Activated T-helper 1 cell treated with anti-CD3 and anti-CD28 coated beads, Interleukin-12 subunit alpha, Interleukin-12 subunit beta, Interleukin-2, Interleukin-4 antibody, amounts not matched to agents 30 ng/mL and 10 ng/mL and 1 ng/mL, durations not matched to agents 14 hours and 24 hours and 36 hours (primary cell): ENCODE measurements at regions of chr7 and their contacts with region 1.

Region 1: DNA sequence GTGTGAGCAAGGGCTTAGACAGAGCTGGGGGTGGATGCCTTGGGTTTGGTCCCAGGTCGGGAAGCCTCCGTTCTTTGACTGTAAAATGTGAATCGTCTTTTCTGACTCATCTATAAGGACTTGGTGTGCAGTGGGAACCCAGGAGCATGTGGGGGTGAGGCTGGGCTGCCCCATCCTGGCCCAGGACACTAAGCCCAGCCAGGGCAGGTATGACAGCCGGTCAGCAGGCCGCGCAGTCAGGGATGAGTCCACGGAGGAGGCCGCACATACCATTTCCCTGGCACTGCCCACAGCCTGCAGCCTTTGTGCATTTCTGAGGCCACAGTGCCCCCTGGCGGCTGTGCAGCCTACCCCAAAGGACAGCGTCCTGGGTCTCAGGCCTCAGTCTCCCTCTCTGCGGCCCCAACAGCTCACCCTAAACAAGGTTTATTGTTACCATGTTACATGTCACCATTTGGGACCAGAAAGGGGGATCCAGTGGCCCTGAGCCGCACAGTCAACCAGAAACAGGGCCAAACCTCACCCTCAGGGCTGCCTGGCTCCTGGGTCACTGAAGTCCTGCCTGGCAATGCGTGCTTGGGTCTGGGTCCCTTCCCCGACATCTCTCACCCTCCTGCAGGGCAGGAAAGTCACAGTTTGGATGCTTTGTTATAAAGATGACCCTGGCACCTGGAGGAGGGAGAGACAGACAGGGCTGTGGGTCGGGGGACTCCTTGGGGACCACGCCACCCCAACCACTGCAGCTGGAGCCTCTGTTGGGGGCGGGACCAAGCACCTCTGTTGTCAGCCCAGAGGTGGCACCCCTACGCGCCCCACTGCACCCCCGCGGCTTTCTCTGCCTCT is 14.4 kb upstream of the SH2B2 start:
- DNase-seq: peak; percentile 53
- H3K4me3 Mint-ChIP-seq: no peak overlapping the region
- H3K27ac Mint-ChIP-seq: no peak overlapping the region
- H3K4me1 Mint-ChIP-seq: no peaks in the 10 kb centered on the region
- H3K27me3 Mint-ChIP-seq: peaks cover 4% of the 10 kb centered on the region

Region 2: DNA sequence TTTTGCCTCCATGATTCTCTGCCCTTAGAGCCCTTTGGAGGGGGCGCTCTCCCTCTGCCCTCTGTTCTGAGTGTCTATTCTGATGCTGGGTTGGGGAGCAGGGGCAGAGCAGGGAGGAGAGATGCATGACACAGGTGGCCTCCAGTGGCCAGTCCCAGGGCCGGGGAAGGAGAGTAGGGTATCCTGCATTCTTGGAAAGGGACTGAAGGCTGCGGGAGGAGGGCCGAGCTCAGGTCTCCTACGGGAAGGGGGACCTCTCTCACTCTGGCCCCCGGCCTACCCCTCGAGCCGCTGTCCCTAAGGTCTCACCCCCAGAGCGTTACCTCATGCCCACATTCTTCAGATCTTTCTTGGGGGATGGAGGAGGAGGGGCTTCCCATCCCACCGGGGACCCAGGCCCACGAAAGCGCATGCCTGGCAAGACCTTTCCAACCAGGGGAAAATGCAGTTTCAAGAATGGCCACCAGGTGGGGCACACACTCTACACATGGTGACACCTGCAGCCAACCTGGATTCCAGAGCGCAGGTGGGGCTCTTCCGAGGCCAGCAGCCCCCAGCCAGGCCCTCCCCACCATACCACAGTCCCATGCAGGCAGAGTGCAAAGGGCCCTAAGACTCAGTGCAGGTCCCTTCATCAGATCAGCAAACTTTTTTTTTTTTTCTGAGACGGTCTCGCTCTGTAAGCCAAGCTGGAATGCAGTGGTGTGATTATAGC is 729.6 kb before region 1 on chr7:
- intact Hi-C with region 1: loop called (anchors 1 kb)
- DNase-seq: peak; percentile 48
- H3K4me3 Mint-ChIP-seq: no peak overlapping the region
- H3K27ac Mint-ChIP-seq: no peak overlapping the region
- H3K4me1 Mint-ChIP-seq: no peaks in the 10 kb centered on the region
- H3K27me3 Mint-ChIP-seq: no peaks in the 10 kb centered on the region

Region 3: DNA sequence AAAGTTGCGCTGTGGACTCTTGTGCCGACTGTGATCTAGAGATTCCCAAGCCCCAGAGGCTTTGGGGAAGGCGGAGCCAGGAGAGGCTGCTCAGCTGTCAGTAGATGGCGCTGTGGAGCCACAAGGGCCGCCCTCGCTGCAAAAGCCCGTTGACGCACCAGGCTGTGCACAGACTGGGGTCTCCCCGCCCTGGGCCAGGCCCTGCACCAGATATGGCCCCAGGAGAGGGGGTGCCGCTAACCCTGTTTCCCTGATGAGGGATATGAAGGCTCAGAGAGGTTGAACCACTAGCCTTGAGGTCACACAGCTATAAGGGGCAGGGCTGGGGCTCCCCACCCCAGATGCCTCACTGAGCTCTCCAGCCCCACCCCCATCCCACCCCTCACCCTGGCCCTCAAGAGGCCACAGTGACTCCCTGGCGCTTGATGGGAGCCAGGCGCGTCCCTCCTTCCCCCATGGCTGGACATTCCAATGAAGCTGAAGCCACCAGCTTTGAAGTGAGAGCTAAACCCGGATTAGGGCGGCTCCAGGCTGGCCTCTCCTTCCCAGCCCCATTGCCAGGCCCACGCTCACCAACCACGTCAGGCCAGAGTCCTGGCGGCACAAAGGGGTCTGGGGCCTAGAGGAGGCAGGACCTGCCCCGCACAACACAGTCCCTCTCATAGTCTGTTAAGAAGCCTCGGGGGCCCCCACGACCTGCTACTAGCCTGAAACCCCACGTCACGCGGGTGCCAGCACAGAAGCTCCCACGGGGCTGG is 669.6 kb before region 1 on chr7:
- intact Hi-C with region 1: loop called (anchors 1 kb)
- DNase-seq: peak; percentile 44
- H3K4me3 Mint-ChIP-seq: no peak overlapping the region
- H3K27ac Mint-ChIP-seq: no peak overlapping the region
- H3K4me1 Mint-ChIP-seq: no peaks in the 10 kb centered on the region
- H3K27me3 Mint-ChIP-seq: no peaks in the 10 kb centered on the region

Region 4: DNA sequence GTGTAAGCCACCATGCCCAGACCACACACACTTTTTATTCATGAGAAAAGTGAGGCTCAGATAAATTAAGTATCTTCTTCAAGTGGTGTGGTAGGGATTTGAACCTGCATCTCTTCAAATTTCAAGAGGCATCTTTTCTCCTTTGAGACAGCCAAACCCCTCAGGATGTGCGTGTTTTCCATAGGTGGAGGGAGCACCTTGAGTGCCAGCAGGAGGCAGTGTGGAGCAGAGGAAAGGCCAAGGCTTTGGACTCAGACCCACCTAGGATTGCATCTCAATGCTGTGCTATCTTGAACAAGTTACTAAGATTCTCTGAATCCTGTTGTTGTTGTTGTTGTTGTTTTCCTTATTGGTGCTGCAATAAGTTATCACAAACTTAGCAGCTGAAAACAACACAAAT is 603.0 kb before region 1 on chr7:
- intact Hi-C with region 1: loop called (anchors 1 kb)
- DNase-seq: no peak
- H3K4me3 Mint-ChIP-seq: no peak overlapping the region
- H3K27ac Mint-ChIP-seq: no peak overlapping the region
- H3K4me1 Mint-ChIP-seq: no peaks in the 10 kb centered on the region
- H3K27me3 Mint-ChIP-seq: peaks cover 2% of the 10 kb centered on the region

Region 5: DNA sequence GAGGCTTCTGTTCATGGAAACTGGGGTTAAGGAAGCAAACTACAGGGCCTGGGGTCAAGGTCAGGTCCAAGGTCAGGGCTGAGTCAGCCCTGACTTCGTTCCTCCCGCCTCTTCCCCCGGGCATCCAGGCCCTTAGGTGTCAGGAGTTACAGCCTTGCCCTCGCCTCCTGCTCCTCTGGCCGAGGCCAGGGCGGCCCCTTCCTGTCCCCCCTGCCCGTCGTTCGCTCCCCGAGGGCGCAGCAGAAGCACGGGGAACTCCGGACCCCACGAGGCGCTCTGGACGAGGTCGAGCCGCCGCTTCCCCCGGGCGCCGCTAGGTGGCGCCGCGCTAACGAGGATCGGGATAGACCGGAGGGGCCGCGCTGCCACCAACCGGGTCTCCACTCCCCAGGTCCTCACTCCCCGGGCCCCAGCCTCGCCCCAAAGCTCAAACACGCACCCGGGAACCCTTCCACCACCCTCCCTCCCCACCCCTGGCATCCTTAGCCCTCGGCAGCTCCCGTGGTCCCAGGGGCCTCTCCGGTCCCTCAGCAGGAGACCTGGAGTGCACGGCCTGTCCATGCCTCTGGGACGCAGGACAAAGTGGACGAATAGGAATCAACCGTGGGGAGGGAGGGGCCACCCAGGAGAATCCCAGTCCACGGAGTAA is 584.0 kb before region 1 on chr7:
- intact Hi-C with region 1: loop called (anchors 1 kb)
- DNase-seq: peak; percentile 67
- H3K4me3 Mint-ChIP-seq: no peak overlapping the region
- H3K27ac Mint-ChIP-seq: no peak overlapping the region
- H3K4me1 Mint-ChIP-seq: peaks cover 6% of the 10 kb centered on the region
- H3K27me3 Mint-ChIP-seq: peaks cover 5% of the 10 kb centered on the region

Region 6: GRCh38 chr7:102248456-102249395 is 23.6 kb before region 1 on chr7:
- intact Hi-C with region 1: loop called (anchors 2 kb)
- DNase-seq: no peak
- H3K4me3 Mint-ChIP-seq: no peak overlapping the region
- H3K27ac Mint-ChIP-seq: no peak overlapping the region
- H3K4me1 Mint-ChIP-seq: no peaks in the 10 kb centered on the region
- H3K27me3 Mint-ChIP-seq: no peaks in the 10 kb centered on the region